ENCODE measurements at regions of chr9 and their contacts with region 1.

Region 1: DNA sequence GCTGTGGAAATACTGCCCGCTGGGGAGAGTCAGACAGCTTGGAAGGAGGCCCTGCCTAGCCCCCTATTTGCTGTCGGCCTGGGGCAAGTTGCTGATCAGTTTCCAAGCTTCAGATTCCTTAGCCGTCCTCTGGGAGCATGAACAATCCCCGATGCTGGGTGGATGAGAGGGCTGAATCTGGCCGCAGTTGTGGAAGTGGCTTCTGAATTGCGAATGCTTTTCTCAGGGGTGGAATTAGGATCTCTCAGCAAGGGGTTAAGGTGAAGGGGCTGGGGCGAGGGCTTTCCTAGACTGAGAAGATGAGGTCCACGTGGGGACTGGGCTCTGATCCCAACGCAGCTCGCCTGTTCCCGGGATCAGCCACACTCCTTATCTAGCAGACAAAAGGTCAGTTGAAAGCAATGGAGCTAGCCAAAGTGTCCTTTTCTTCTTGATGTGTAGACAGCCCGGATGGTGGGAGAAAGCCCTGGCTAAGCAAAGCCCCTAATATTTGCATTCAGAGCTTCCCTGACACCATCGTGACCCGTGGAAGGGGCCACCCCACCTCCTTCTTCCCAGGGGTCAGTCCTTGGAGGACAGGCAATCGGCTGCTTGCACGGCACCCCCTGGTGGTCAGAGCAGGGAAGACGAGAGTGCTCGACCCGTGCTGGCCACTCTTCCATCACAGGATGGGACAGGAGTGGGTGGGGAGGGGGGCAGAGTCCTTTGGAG is 54.9 kb downstream of the COL15A1 start:
- DNase-seq: peak in 9 of 10 donors; percentile 67 to 83 (median 78)
- H3K4me3 ChIP-seq: peak overlapping the region in 38 of 59 donors; percentile 1 to 55 (median 32)
- H3K27ac ChIP-seq: peak overlapping the region in 3 of 59 donors; percentile 16 to 51 (median 23)
- H3K27me3 ChIP-seq: no peaks in the 10 kb centered on the region
- CTCF ChIP-seq: peak; percentile 48 to 97 (median 89)

Region 2: GRCh38 chr9:98807070-98807810 is 191.4 kb before region 1 on chr9 and contains the start of gene GALNT12:
- intact Hi-C with region 1: loop called in 1 of 2 experiments (anchors 5 kb)
- DNase-seq: peak in 8 of 10 donors; percentile 25 to 79 (median 50)
- H3K4me3 ChIP-seq: peak within 1 kb of the TSS; percentile 46 to 81 (median 65)
- H3K27ac ChIP-seq: peak within 1 kb of the TSS in 52 of 59 donors; percentile 1 to 82 (median 58)
- H3K27me3 ChIP-seq: no peaks in the 10 kb centered on the region
- CTCF ChIP-seq: peak in 16 of 56 donors; percentile 5 to 47 (median 18)
- total RNA-seq, gene GALNT12: 1.6 to 9.7 (median 3.9) TPM

Region 3: DNA sequence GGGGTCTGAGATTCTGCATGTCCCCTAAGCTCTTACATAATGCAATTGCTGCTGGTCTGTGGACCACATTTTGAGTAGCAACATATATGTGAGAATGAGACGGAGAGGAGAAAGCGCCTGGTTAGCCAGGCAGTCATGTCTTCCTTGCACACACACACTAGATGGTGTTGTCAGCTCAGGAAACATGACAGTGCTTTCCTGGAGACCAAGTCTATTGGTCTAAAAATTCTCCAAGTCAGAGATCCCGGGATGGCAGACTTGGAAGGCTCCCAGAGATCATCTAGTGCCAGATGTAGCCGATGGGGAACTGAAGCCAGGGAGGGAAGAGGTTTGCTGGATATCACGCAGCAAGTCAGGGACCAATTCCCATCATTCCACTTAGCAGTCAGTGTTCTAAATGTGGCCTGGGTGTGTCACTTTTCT is 137.7 kb before region 1 on chr9:
- intact Hi-C with region 1: loop called (anchors 1 to 5 kb)
- DNase-seq: peak in 8 of 10 donors; percentile 23 to 69 (median 47)
- H3K4me3 ChIP-seq: no peak overlapping the region
- H3K27ac ChIP-seq: no peak overlapping the region
- H3K27me3 ChIP-seq: peaks cover 0 to 4% (median 0%) of the 10 kb centered on the region in 45 donors
- CTCF ChIP-seq: peak in 54 of 56 donors; percentile 31 to 84 (median 64)

Region 4: DNA sequence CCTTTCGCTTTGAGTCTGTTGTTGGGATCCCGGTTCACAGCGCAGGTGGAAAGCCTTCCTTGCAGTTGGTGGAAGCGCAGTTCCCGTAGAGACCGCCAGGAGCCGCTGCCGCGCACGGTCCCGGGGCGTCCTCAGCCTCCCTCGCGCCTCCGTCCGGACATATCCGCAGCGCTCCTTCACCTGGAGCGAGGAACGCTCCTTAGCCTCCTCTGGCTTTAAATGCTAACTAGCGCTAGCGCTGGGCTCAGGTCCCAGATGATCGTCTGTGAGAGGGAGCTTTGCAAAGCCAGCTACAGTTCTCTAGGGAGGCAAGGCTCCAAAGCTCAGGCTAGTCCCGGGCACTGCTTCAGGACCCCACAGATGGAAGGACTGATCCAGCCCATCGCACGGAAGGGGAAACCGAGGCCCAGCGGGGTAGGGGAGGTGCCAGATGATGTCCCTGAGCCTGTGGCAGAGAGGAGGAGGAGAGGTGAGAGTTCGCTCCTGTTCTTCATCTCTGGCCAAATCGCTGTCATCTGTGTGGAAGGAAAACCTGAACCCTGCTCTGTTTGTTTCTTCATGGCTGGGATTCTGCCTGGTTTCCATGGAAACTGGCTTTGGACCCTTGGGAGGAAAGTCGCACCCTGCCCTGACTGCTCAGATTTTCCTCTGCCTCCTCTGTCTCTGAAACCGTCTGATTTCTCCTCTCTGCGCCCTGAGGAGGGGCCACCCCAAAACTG is 23.4 kb before region 1 on chr9:
- intact Hi-C with region 1: loop called in 1 of 2 experiments (anchors 2 kb)
- DNase-seq: peak in 9 of 10 donors; percentile 69 to 88 (median 78)
- H3K4me3 ChIP-seq: peak overlapping the region in 57 of 59 donors; percentile 11 to 67 (median 44)
- H3K27ac ChIP-seq: peak overlapping the region in 1 of 59 donors; percentile 25
- H3K27me3 ChIP-seq: peaks cover 0 to 7% (median 0%) of the 10 kb centered on the region in 45 donors
- CTCF ChIP-seq: peak; percentile 69 to 99 (median 96)

Region 5: DNA sequence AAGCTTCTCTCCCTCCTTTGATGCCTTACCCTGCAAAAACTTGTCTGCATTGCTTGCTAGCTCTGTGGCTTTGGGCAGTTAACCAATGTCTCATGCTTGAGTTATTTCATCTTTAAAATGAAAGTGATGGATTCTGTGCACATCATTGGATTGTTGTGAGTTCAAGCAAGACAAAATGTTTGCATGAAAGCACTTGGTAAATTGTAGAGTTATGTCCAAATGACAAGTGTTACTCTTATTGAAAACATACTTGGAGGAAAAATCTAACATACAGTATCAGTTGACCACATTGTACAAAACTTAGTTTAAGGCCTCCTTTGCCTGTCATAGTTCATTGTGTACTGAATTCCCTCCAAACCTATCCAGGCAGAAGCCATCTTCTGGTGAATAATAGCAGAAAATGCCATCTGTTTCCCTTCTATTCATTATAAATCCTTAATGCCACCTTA is 136.3 kb after region 1 on chr9:
- intact Hi-C with region 1: loop called (anchors 2 to 5 kb)
- DNase-seq: no peak
- H3K4me3 ChIP-seq: no peak overlapping the region
- H3K27ac ChIP-seq: peak overlapping the region in 1 of 59 donors; percentile 50
- H3K27me3 ChIP-seq: no peaks in the 10 kb centered on the region
- CTCF ChIP-seq: no peak